ENCODE measurements at regions of chr3 and their contacts with region 1.

Region 1: DNA sequence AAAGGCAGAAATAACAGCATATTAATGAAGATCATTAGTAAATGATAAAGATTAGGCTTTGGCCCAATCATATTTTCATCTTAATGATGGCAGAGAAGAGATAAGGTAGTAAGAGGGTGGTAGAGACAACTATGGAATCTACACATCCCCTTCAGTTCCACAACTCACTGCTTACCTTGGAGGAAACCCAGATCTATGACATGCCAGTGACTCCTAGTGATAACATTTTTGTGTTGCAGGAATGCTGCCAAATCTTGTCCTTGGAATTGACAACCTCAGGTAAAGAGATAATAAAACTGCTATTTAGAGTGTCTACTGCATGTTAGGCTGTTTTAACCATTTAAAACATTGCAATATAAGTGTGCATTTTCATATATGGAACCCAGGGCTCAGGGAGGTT is 347.5 kb upstream of the ARPP21 start:
- DNase-seq: peak in 1 of 2 experiments; percentile 10
- H3K4me3 ChIP-seq: no peak overlapping the region
- H3K4me3 Mint-ChIP-seq: no peak overlapping the region
- H3K27ac Mint-ChIP-seq: no peak overlapping the region
- H3K4me1 ChIP-seq: no peaks in the 10 kb centered on the region
- H3K4me1 Mint-ChIP-seq: no peaks in the 10 kb centered on the region
- H3K27me3 ChIP-seq: no peaks in the 10 kb centered on the region
- H3K27me3 Mint-ChIP-seq: no peaks in the 10 kb centered on the region
- CTCF ChIP-seq: peak; percentile 7 to 12

Region 2: DNA sequence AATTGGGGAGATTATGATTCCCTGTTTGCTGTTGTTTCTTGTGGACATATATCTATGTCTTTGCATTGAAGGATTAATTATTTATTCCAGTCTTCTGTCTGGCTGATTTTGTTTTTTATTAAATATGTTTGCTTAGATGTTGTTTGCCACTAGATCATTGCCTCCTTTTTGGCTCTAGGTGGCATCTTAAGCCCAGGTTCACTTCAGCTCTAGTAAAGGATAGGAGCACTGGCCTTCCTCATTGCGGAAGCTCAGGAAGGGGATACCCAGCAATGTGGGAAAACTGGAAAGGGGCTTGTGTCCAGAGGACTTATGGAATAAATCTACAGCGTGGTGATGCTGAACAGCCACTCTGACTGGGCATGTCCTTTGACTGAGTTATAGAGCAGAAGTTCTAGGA is 671.8 kb before region 1 on chr3:
- CTCF ChIA-PET with region 1: no interaction called
- POLR2A ChIA-PET with region 1: no interaction called
- intact Hi-C with region 1: loop called (anchors 5 kb)
- DNase-seq: peak in 1 of 2 experiments; percentile 10
- H3K4me3 ChIP-seq: no peak overlapping the region
- H3K4me3 Mint-ChIP-seq: no peak overlapping the region
- H3K27ac Mint-ChIP-seq: no peak overlapping the region
- H3K4me1 ChIP-seq: no peaks in the 10 kb centered on the region
- H3K4me1 Mint-ChIP-seq: no peaks in the 10 kb centered on the region
- H3K27me3 ChIP-seq: no peaks in the 10 kb centered on the region
- H3K27me3 Mint-ChIP-seq: no peaks in the 10 kb centered on the region
- CTCF ChIP-seq: no peak

Region 3: GRCh38 chr3:34882764-34883163 is 409.1 kb before region 1 on chr3:
- CTCF ChIA-PET with region 1: no interaction called
- POLR2A ChIA-PET with region 1: no interaction called
- intact Hi-C with region 1: loop called (anchors 5 kb)
- DNase-seq: peak in 1 of 2 experiments; percentile 1
- H3K4me3 ChIP-seq: no peak overlapping the region
- H3K4me3 Mint-ChIP-seq: no peak overlapping the region
- H3K27ac Mint-ChIP-seq: no peak overlapping the region
- H3K4me1 ChIP-seq: no peaks in the 10 kb centered on the region
- H3K4me1 Mint-ChIP-seq: no peaks in the 10 kb centered on the region
- H3K27me3 ChIP-seq: no peaks in the 10 kb centered on the region
- H3K27me3 Mint-ChIP-seq: no peaks in the 10 kb centered on the region
- CTCF ChIP-seq: peak; percentile 11 to 31

Region 4: GRCh38 chr3:35439663-35440062 is 147.8 kb after region 1 on chr3:
- CTCF ChIA-PET with region 1: no interaction called
- POLR2A ChIA-PET with region 1: no interaction called
- intact Hi-C with region 1: no loop called
- DNase-seq: peak; percentile 55 to 61
- H3K4me3 ChIP-seq: no peak overlapping the region
- H3K4me3 Mint-ChIP-seq: no peak overlapping the region
- H3K27ac Mint-ChIP-seq: peak overlapping the region; percentile 69
- H3K4me1 ChIP-seq: peaks cover 21% of the 10 kb centered on the region
- H3K4me1 Mint-ChIP-seq: peaks cover 25% of the 10 kb centered on the region
- H3K27me3 ChIP-seq: no peaks in the 10 kb centered on the region
- H3K27me3 Mint-ChIP-seq: peaks cover 2% of the 10 kb centered on the region
- CTCF ChIP-seq: no peak

Measured in Caco-2 (cell line).